Stomach (tissue), 19 donors: ENCODE measurements at regions of chr14 and their contacts with region 1.

Region 1: DNA sequence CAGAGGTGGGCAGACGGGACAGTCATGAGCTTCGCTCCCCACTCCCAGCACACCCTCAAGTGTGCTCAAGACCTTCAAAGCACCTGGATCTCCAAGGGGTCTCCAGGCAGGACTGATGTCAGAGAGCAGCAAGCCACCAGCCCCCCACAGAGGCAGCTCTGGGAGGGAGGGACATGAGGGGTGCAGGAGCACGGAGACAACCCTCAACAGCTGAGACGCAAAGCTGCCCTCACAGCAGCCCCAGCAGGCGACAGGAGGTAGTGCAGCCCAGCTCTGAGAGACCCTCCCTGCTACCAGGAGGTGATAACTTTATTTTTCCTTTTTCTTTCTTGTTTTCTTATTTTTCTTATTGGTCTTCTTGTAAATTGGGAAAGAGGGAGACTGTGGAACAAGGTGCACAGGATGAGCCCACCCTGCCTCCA is 17.9 kb downstream of the SIVA1 start:
- DNase-seq: no peak
- H3K4me3 ChIP-seq: no peak overlapping the region
- H3K27ac ChIP-seq: no peak overlapping the region
- H3K4me1 ChIP-seq: peaks cover 24 to 55% (median 44%) of the 10 kb centered on the region in 4 donors
- H3K27me3 ChIP-seq: no peaks in the 10 kb centered on the region
- CTCF ChIP-seq: peak in 3 of 7 experiments; percentile 11 to 39 (median 13)
- EP300 ChIP-seq: no peak
- POLR2A ChIP-seq: no peak

Region 2: GRCh38 chr14:104826189-104826860 is 55.5 kb after region 1 on chr14:
- intact Hi-C with region 1: loop called (anchors 10 kb)
- DNase-seq: peak; percentile 96
- H3K4me3 ChIP-seq: peak overlapping the region; percentile 53 to 67 (median 58)
- H3K27ac ChIP-seq: peak overlapping the region; percentile 49 to 77 (median 70)
- H3K4me1 ChIP-seq: peaks cover 22 to 29% (median 25%) of the 10 kb centered on the region in 4 donors
- H3K27me3 ChIP-seq: peaks cover 0 to 29% (median 0%) of the 10 kb centered on the region in 3 donors
- CTCF ChIP-seq: peak in 5 of 7 experiments; percentile 23 to 95 (median 90)
- EP300 ChIP-seq: no peak
- POLR2A ChIP-seq: no peak

Region 3: DNA sequence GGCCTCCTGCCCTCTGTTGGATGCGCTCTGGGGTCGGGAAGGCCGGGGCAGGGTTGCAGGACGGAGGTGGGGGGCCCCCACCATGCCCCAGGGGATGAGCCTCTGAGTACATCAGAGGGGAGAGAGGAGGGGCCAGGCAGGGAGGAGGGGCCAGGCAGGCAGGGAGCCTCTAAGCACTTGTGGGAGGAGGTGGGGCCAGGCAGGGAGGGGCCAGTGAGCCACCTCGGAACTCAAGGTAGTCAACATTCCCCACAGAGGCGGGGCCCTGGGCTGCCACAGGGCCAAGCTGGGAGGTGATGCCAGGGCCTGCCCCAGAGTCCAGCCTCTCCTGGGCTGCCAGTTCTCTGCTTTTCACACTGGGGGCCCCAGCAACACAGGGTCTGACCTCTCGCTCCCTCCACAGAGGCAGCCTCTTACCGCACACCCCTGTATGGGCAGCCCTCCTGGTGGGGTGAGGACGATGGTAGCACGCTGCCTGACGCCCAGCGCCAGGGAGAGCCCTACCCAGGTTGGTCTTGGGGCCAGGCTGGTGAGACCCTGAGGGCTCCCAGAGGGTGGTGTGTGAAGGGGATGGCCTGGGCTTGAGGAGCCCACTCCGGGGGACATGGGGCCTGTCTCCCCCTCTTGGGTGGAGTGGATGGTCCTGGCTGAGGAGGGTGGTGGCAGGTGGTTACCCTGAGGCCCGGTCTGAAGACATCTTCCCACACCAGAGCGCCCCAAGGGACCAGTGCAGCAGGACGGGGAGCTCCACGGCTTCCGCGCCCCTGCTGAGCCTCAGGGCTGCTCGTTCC is 111.7 kb after region 1 on chr14:
- intact Hi-C with region 1: no loop called
- DNase-seq: peak; percentile 73 to 83
- H3K4me3 ChIP-seq: no peak overlapping the region
- H3K27ac ChIP-seq: peak overlapping the region in 1 of 5 donors; percentile 29
- H3K4me1 ChIP-seq: peaks cover 0 to 5% (median 5%) of the 10 kb centered on the region in 4 donors
- H3K27me3 ChIP-seq: no peaks in the 10 kb centered on the region
- CTCF ChIP-seq: no peak
- EP300 ChIP-seq: no peak
- POLR2A ChIP-seq: no peak

Region 4: GRCh38 chr14:104957146-104958113 is 186.6 kb after region 1 on chr14:
- intact Hi-C with region 1: no loop called
- DNase-seq: no peak
- H3K4me3 ChIP-seq: no peak overlapping the region
- H3K27ac ChIP-seq: no peak overlapping the region
- H3K4me1 ChIP-seq: peaks cover 8 to 14% (median 10%) of the 10 kb centered on the region in 4 donors
- H3K27me3 ChIP-seq: peaks cover 0 to 14% (median 0%) of the 10 kb centered on the region in 3 donors
- CTCF ChIP-seq: no peak
- EP300 ChIP-seq: no peak
- POLR2A ChIP-seq: no peak